Left colon (tissue), 2 donors: ENCODE measurements at regions of chr1 and their contacts with region 1.

Region 1: GRCh38 chr1:102191723-102192122 is 195.0 kb upstream of the OLFM3 start:
- DNase-seq: peak in 1 of 2 donors; percentile 7
- ATAC-seq: peak; percentile 94

Region 2: GRCh38 chr1:101993710-101994109 is 198.0 kb before region 1 on chr1:
- intact Hi-C with region 1: loop called in 1 of 2 experiments (anchors 5 kb)
- DNase-seq: no peak
- ATAC-seq: peak; percentile 55